AG04449 (cell line): ENCODE measurements at regions of chr1 and their contacts with region 1.

Region 1: GRCh38 chr1:12407050-12407961 is 177.5 kb downstream of the VPS13D start:
- DNase-seq: no peak
- H3K4me3 ChIP-seq: no peak overlapping the region
- CTCF ChIP-seq: peak; percentile 25

Region 2: DNA sequence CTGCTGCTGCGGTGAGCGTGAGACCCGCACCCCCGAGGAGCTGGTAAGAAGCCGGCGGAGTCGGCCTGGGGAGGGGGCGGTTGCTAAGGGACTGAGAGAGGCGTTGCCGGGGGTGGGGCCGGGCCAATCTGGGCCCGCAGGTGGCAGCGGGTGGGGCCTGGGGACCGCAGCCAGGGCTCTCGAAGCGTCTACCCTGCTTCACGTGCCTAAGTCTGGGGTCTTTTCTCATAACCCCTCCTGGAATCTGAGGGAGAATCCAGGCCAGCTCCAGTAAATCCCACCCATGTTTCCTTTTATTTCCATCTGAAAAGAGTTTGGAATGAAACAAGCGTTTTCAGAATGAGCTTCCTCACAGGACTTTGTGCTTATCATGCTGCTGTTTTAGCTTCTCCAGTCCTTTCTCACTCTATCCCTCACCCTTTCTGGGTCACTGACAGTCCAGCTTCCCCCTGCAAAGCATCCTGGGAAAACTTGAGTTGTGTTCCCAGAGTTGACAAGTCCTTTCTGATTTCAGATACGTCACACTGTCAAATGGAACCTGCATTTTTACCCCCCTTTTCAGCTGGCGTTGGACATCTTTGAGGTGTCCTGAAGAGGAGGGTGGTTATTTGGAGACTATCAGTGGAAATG is 600.9 kb before region 1 on chr1:
- CTCF ChIA-PET with region 1: no interaction called
- POLR2A ChIA-PET with region 1: no interaction called
- DNase-seq: no peak
- H3K4me3 ChIP-seq: peak overlapping the region; percentile 95
- CTCF ChIP-seq: no peak

Region 3: GRCh38 chr1:12424087-12424529 is 16.8 kb after region 1 on chr1:
- CTCF ChIA-PET with region 1: interaction called, 17 read pairs
- POLR2A ChIA-PET with region 1: no interaction called
- DNase-seq: no peak
- H3K4me3 ChIP-seq: no peak overlapping the region
- CTCF ChIP-seq: no peak

Region 4: DNA sequence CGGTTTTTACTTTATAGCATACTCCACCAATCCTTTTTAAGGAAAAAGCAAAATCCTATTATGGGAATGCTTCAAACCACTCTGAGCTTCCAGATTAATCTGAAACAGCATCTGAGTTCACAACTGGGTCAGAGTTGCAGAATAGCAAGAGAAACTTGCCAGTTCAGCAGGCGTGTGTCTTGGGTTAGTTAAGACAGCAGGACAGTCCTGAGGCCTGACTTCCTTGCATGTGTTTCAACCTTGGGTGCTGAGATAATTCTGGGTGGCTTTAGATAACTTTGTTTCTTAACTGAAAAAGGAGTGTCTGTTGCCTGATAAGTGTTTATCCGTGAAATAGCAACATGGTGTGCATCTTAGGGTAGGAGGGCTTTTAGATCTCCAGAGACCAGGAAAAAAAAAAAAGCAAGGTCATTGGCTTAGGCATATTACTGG is 41.5 kb after region 1 on chr1:
- CTCF ChIA-PET with region 1: interaction called, 12 read pairs
- POLR2A ChIA-PET with region 1: no interaction called
- DNase-seq: no peak
- H3K4me3 ChIP-seq: no peak overlapping the region
- CTCF ChIP-seq: no peak

Region 5: DNA sequence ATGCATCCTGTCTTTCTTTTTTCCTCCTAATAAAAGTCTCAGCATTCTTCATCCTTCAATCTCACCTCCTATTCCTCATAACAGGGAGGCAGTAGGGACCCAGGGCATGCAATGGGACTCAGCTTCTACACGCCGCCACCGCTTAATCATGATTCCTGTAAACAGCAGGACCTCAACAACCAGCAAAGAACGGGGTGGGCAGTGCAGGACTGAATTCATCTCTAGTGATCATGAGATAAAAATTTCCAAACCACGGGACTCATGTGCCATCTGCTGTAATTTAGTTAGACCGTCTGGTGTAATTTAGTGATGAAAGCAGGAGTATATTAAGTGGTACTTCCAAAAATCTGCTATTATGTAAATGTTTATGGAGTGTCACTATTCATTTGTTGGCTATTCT is 371.6 kb after region 1 on chr1:
- CTCF ChIA-PET with region 1: no interaction called
- POLR2A ChIA-PET with region 1: no interaction called
- DNase-seq: no peak
- H3K4me3 ChIP-seq: no peak overlapping the region
- CTCF ChIP-seq: no peak